ENCODE measurements at regions of chr19 and their contacts with region 1.

Region 1: GRCh38 chr19:41353466-41354342 is at the start of gene TGFB1:
- DNase-seq: peak; percentile 96
- H3K4me3 ChIP-seq: peak within 1 kb of the TSS; percentile 74 to 85 (median 77)
- H3K27ac ChIP-seq: peak within 1 kb of the TSS; percentile 87 to 95 (median 94)
- H3K4me1 ChIP-seq: peaks cover 0 to 34% (median 24%) of the 10 kb centered on the region in 4 donors
- H3K27me3 ChIP-seq: no peaks in the 10 kb centered on the region
- CTCF ChIP-seq: peak; percentile 85 to 88 (median 86)
- EP300 ChIP-seq: no peak
- POLR2A ChIP-seq: no peak
- total RNA-seq, gene TGFB1: 16.4 to 27.1 (median 18.1) TPM

Region 2: DNA sequence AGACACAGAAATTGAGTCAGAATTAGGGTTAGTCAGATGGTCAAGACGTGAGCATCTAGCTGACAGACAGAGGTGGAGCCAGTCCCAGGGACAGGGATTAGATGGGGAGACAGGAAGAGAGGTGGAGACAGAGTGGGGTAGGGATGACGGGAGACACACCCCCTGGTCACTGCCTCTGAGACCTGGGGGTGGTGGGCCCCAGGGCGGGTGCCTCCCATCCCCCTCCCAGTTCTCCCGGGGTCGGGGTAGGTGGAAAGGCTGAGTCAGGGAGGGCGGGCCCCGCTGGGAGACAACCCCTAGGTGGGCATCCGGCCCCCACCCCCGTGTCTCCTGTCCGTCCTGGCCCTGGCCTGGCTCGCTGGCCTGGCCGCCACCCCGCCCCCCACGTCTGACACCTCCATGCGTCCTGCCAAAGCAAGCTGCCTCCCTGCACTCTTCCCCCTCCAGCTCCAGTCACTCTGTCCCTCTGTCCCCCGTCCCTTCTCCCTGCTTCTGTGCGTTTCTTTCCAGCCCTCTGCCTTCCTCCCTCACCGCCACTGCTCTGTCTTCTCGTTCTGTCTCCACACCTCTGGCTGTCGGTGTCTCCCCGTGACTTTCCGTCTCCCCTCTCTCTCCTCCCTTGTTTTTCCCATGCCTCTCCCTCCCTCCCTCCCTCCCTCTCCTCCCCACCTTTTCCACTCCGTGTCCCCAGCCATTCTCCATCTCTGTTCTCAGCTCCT is 28.6 kb before region 1 on chr19:
- intact Hi-C with region 1: loop called (anchors 2 kb)
- DNase-seq: peak; percentile 89
- H3K4me3 ChIP-seq: peak overlapping the region; percentile 19 to 42 (median 36)
- H3K27ac ChIP-seq: peak overlapping the region; percentile 79 to 90 (median 86)
- H3K4me1 ChIP-seq: peaks cover 0 to 69% (median 59%) of the 10 kb centered on the region in 4 donors
- H3K27me3 ChIP-seq: no peaks in the 10 kb centered on the region
- CTCF ChIP-seq: no peak
- EP300 ChIP-seq: peak in 2 of 4 donors; percentile 4 to 7
- POLR2A ChIP-seq: no peak

Region 3: GRCh38 chr19:41397086-41398049 is 43.7 kb after region 1 on chr19 and contains the starts of genes BCKDHA and EXOSC5:
- intact Hi-C with region 1: loop called (anchors 2 kb)
- DNase-seq: peak; percentile 100
- H3K4me3 ChIP-seq: peak within 1 kb of the TSS; percentile 82 to 93 (median 87)
- H3K27ac ChIP-seq: peak within 1 kb of the TSS; percentile 85 to 89 (median 86)
- H3K4me1 ChIP-seq: peaks cover 0 to 31% (median 26%) of the 10 kb centered on the region in 4 donors
- H3K27me3 ChIP-seq: no peaks in the 10 kb centered on the region
- CTCF ChIP-seq: no peak
- EP300 ChIP-seq: peak in 1 of 4 donors; percentile 25
- POLR2A ChIP-seq: peak; percentile 29 to 57
- total RNA-seq, gene BCKDHA: 29.6 to 35.7 (median 33.6) TPM
- total RNA-seq, gene EXOSC5: 6.6 to 21.4 (median 14.4) TPM